ENCODE measurements at regions of chr10 and their contacts with region 1.

Region 1: GRCh38 chr10:90701428-90701827 is 156.4 kb downstream of the HTR7 start:
- DNase-seq: no peak
- H3K4me3 ChIP-seq: no peak overlapping the region
- H3K27ac ChIP-seq: no peak overlapping the region
- H3K4me1 ChIP-seq: no peaks in the 10 kb centered on the region
- H3K27me3 ChIP-seq: no peaks in the 10 kb centered on the region
- CTCF ChIP-seq: no peak
- POLR2A ChIP-seq: no peak

Region 2: GRCh38 chr10:90462749-90463470 is 238.5 kb before region 1 on chr10:
- intact Hi-C with region 1: loop called in 1 of 2 experiments (anchors 5 kb)
- DNase-seq: no peak
- H3K4me3 ChIP-seq: no peak overlapping the region
- H3K27ac ChIP-seq: no peak overlapping the region
- H3K4me1 ChIP-seq: no peaks in the 10 kb centered on the region
- H3K27me3 ChIP-seq: no peaks in the 10 kb centered on the region
- CTCF ChIP-seq: no peak
- POLR2A ChIP-seq: no peak

Region 3: DNA sequence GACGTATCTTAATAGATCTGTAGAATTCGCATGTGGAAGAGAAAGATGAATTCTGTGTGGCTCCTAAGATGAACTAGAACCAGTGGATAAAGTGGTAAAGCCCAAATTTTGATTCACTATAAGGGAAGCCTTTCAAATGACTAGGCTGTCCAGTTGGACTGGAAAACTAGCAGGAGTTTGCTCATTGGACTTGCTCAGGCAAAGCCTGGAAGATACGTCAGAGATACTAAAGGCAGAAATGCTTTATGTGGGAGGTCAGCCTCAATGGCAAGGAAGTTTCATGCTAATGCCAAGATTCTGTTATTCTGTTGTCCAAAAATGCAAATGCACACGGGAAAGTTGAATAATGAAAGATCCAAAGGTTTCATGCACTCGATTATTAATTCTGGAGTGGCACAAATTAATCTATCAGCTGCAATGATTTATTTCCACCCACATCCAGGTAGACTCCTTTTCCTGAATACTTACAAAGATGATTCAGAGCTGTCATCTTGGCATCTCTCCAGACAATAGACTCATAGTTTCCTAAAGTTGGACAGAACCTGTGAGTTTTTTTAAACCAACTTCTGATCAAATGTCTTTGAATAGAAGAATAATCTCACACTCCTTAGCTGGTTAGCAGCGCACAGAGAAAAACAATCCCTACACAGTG is 951.9 kb after region 1 on chr10:
- intact Hi-C with region 1: no loop called
- DNase-seq: no peak
- H3K4me3 ChIP-seq: no peak overlapping the region
- H3K27ac ChIP-seq: no peak overlapping the region
- H3K4me1 ChIP-seq: no peaks in the 10 kb centered on the region
- H3K27me3 ChIP-seq: no peaks in the 10 kb centered on the region
- CTCF ChIP-seq: no peak
- POLR2A ChIP-seq: no peak

Measured in adrenal gland (tissue), 19 donors.